Sigmoid colon (tissue), 7 donors: ENCODE measurements at regions of chr10 and their contacts with region 1.

Region 1: DNA sequence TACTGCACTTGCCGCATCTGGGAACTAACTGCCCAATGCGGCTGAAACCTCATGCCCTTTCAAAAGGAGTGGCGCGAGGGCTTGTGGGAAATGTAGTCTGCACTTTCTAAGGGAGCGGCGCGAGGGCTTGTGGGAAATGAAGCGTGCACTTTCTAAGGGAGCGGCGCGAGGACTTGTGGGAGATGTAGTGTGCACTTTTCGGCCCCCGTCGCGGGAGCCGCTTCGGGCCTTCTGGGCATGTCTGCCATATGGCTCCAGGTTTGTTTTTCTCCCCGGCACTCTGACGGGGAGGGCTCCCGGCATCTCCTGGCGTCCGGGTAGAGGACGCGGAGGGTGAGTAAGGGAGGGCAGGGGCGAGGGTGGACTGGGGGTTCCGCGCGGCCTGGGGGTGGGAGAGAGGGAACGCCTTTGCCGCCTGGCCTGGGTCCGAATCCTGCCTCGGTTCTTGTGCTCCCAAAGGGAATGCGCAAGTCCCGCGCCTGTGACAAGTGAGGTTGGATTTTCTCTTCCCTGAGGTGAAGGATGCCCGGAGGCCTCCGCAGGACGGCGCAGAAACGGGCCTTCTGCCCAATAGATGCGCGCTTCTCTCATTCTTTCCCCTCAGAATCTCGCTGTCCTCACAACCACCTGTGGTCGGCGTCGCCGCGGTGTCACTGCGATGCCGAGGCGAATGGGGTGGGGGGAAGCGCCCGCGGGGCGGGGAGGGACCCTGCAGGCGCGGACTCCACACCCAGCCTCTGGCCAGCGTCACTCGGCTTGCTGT is at the start of gene ZNF37A:
- DNase-seq: peak; percentile 96
- H3K4me3 ChIP-seq: peak within 1 kb of the TSS; percentile 70 to 86 (median 76)
- H3K27ac ChIP-seq: peak within 1 kb of the TSS; percentile 88 to 92 (median 90)
- H3K4me1 ChIP-seq: peaks cover 0 to 20% (median 11%) of the 10 kb centered on the region in 4 donors
- H3K27me3 ChIP-seq: no peaks in the 10 kb centered on the region
- CTCF ChIP-seq: no peak
- EP300 ChIP-seq: no peak
- POLR2A ChIP-seq: peak in 1 of 2 donors; percentile 39
- total RNA-seq, gene ZNF37A: 19.3 to 37.1 (median 23.7) TPM

Region 2: DNA sequence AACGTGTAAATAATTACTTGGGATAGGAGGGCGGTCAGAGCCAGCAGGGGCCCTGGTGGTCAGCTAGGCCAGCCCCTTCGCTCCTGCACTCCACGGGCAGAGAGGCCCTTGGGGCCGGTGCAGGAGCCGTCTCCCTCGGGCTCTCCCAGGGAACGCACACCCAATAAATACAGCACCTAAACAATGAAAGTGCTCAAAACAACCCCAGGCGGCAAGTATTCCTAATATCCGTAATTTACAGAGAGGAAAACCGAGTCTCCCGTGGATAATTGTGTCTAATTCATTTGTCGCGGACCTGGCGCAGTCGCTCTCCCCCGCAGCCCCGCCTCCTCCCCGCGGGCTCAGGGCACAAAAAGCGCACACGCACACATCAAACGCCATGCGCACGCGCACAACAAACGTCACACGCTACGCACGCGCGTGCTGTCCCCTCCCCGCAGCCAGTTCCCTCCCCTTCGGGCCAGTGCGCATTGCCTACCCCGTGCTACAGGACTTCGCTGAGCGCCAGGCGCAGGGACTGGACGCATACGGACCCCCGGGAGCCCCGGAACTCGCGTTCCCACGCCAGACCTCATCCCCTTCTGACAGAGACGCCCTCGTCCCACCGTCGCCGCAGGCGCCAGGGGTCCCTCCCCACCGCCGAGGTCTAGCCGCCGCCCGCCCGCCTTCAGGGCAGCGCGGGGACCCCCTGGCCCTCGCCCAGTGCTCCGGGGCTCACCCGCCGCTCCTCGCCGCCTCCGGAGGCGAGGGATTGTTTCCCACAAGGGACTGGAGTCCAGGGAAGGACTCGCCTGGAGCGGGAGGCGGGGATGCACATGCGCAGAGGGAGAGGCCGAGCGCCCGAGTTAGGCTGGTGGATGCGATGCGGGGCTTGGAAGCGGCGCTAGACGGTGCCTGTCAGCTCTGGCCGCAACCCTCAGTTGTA is 236.8 kb before region 1 on chr10 and contains the start of gene ZNF248:
- intact Hi-C with region 1: loop called (anchors 5 kb)
- DNase-seq: peak; percentile 99
- H3K4me3 ChIP-seq: peak within 1 kb of the TSS; percentile 73 to 97 (median 91)
- H3K27ac ChIP-seq: peak within 1 kb of the TSS; percentile 99 to 100 (median 100)
- H3K4me1 ChIP-seq: peaks cover 0 to 64% (median 53%) of the 10 kb centered on the region in 4 donors
- H3K27me3 ChIP-seq: no peaks in the 10 kb centered on the region
- CTCF ChIP-seq: no peak
- EP300 ChIP-seq: peak; percentile 20 to 96 (median 71)
- POLR2A ChIP-seq: peak; percentile 96 to 98
- total RNA-seq, gene ZNF248: 40.2 to 46.4 (median 43.4) TPM

Region 3: DNA sequence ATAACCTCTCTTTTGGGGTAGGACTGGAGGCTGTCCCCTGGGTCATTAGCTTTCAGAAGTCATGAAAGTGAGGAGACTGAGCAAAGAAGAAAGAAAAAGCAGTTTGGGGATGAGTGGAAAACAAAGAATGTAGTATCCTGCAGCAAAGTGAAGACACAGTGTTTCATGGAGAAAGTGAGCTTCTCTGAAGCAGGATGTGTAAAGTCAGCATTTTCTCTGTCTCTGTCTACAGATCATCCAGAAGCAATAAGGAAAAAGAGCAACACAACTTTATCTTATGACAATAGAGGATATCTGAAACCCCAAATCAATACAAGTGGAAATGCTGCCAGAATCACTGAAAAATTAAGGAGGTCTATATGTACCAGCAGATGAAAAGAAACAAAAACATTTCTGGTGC is 208.5 kb before region 1 on chr10:
- intact Hi-C with region 1: no loop called
- DNase-seq: no peak
- H3K4me3 ChIP-seq: no peak overlapping the region
- H3K27ac ChIP-seq: no peak overlapping the region
- H3K4me1 ChIP-seq: peaks cover 0 to 3% (median 0%) of the 10 kb centered on the region in 4 donors
- H3K27me3 ChIP-seq: no peaks in the 10 kb centered on the region
- CTCF ChIP-seq: no peak
- EP300 ChIP-seq: no peak
- POLR2A ChIP-seq: no peak

Region 4: DNA sequence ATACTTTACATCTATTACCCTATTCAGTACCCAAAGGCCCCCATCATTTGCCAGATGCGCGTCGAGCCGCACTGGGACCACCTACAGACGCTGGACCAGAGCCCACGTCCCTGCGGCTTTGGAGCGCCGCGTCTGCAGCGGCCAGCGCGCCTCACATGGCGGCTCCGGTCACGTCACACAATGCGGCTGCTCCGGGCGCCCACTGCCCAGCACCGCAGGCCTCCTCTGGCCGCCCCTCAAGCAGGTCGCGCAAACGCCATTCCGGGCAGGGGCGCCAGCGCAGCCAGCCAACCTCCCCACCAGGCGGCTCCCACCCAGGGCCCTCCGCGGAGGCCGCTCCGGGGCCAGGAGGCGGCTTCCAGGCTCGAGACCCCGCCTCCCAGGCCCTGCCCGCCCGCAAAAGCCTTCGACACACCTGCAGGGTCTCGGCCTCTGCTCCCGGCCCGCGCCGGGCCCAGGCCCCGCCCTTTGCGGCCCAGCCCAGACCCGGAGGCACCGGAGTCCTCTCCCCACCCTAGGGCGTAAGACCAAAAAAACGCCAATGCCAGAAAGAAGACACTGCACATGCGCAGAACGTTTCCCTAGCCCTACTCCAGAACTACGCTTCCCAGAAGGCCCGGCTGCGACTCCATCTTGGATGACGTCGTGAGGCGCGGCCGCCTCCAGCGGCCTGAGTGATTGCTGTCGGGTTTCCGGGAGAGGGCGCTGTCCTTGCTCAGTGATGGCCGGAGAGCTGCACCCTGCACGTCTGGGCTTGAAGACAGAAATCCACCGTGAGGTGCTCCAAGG is 118.1 kb before region 1 on chr10 and contains the start of gene ZNF25:
- intact Hi-C with region 1: loop called (anchors 1 kb)
- DNase-seq: peak; percentile 99
- H3K4me3 ChIP-seq: peak within 1 kb of the TSS; percentile 80 to 99 (median 88)
- H3K27ac ChIP-seq: peak within 1 kb of the TSS; percentile 99 to 100 (median 100)
- H3K4me1 ChIP-seq: peaks cover 0 to 20% (median 11%) of the 10 kb centered on the region in 4 donors
- H3K27me3 ChIP-seq: no peaks in the 10 kb centered on the region
- CTCF ChIP-seq: peak; percentile 80 to 96 (median 86)
- EP300 ChIP-seq: no peak
- POLR2A ChIP-seq: peak; percentile 81 to 83
- total RNA-seq, gene ZNF25: 20.5 to 35.7 (median 27.9) TPM

Region 5: DNA sequence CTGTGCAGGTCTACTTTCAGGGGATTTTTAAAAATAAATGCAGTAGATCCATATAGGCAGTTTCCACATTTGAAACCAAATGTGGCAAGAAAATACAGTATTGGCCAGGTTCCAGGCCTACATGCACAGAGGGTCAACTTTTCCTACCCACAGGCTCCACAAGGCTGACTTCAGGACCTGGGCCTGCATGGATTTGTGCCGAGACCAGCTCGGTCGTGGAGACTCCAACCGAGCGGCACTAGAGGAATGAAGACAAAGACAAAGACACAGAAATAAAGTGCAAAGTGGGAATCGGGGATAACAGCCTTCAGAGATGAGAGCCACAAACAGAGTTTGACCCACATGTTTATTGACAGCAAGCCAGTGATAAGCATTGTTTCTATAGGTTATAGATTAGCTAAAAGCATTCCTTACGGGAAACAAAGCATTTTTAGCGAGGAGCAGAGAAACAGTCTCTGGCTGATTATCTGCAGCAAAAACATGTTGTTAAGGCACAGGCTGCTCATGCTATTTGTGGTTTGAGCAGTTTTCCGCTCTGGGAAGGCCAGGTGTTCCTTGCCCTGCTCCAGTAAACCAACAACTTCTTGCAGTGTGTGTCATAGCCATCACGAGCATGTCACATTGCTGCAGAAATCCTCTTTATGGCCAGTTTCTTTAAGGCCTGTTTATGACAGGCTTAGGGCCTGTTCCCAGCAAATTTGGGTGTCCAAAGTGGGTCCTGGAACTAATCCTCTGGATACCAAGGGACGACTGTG is 52.4 kb after region 1 on chr10:
- intact Hi-C with region 1: no loop called
- DNase-seq: no peak
- H3K4me3 ChIP-seq: no peak overlapping the region
- H3K27ac ChIP-seq: no peak overlapping the region
- H3K4me1 ChIP-seq: no peaks in the 10 kb centered on the region
- H3K27me3 ChIP-seq: no peaks in the 10 kb centered on the region
- CTCF ChIP-seq: no peak
- EP300 ChIP-seq: no peak
- POLR2A ChIP-seq: no peak

Region 6: DNA sequence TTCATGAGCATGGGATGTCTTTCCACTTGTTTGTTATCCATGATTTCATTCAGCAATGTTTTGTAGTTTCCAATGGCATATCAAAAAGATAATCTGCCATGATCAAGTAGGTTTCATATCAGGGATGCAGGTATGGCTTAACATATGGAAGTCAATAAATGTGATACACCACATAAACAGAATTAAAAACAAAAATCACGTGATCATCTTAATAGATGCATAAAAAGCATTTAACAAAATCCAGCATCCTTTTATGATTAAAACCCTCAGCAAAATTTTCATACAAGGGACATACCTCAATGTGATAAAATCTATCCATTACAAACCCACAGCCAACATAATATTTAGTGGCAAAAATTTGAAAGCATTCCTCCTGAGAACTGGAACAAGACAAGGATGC is 90.1 kb after region 1 on chr10:
- intact Hi-C with region 1: no loop called
- DNase-seq: no peak
- H3K4me3 ChIP-seq: no peak overlapping the region
- H3K27ac ChIP-seq: no peak overlapping the region
- H3K4me1 ChIP-seq: no peaks in the 10 kb centered on the region
- H3K27me3 ChIP-seq: no peaks in the 10 kb centered on the region
- CTCF ChIP-seq: no peak
- EP300 ChIP-seq: no peak
- POLR2A ChIP-seq: no peak